Right ventricle myocardium inferior (tissue), 1 donor: ENCODE measurements at regions of chr17 and their contacts with region 1.

Region 1: DNA sequence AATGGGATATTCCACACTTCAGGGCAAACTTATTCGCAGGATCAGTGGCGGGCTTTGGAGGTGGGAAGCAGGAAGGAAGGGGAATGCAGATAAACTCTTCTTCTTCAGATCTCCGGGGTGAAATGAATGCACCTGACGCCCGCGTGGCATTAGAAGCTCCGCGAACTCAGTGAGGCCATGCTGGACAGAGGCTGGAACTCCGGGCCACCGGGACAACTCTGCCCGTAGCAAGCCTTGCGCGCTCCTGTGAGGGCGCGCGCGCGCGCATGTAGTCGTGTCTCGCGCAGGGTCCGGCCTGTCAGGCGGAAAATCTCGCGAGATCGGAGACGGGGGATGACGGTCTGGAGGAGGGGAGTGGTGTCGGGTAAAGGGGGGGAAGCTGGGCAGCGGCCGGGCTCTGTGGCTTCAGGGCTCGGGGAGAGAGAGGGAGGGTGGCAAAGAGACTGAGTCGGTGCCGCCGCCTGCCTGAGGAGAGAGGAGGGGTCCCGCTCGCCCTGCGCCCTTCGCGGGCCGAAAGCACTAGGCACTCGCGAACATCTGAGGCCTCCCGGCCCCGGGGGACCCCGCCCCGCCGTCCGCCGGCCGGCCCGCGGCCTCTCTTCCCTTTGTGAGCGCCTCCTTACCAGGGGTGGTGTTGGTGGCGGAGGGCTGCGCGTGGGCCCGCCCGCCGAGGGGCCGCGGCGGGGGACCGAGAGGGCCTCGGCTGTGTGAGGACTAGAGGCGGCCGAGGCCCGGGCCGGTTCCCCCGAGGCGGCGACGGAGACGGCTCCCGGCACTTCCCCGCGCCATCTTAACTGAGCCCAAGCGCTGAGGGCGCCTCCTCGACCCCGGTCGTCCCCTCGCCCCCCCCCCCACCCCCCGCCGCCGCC is at the start of gene TAOK1:
- DNase-seq: peak; percentile 100
- ATAC-seq: peak; percentile 99
- total RNA-seq, gene TAOK1: 45.1 TPM

Region 2: GRCh38 chr17:29451121-29451742 is 61.0 kb after region 1 on chr17:
- intact Hi-C with region 1: no loop called
- DNase-seq: no peak
- ATAC-seq: peak; percentile 37

Region 3: GRCh38 chr17:29461483-29462206 is 71.4 kb after region 1 on chr17:
- intact Hi-C with region 1: loop called (anchors 5 kb)
- DNase-seq: no peak
- ATAC-seq: no peak